ENCODE measurements at regions of chr6 and their contacts with region 1.

Region 1: DNA sequence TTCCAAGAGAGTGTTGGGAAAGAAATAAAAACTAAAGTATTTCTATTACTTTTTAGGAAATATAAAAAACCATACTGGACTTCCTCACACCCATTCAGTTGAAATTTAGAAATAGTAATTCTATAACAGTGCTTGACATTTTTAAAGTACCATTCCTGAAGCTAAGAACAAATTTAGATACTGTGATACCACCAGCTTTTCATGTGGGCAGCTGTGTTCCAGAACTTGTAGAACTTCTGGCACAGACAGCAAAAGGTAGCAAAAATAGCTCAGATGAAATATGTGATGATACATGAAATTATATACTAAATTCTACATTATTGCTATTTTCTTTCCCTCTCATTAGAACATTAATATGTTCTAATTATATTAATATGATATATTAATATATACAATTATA is 346.5 kb downstream of the SYNE1 start:
- DNase-seq: no peak
- ATAC-seq: no peak
- H3K4me3 ChIP-seq: no peak overlapping the region
- H3K27ac ChIP-seq: no peak overlapping the region
- H3K4me1 ChIP-seq: no peaks in the 10 kb centered on the region
- H3K27me3 ChIP-seq: no peaks in the 10 kb centered on the region

Region 2: GRCh38 chr6:152318278-152318677 is 27.6 kb after region 1 on chr6:
- intact Hi-C with region 1: loop called in 1 of 2 experiments (anchors 1 kb)
- DNase-seq: no peak
- ATAC-seq: no peak
- H3K4me3 ChIP-seq: no peak overlapping the region
- H3K27ac ChIP-seq: no peak overlapping the region
- H3K4me1 ChIP-seq: no peaks in the 10 kb centered on the region
- H3K27me3 ChIP-seq: no peaks in the 10 kb centered on the region

Region 3: DNA sequence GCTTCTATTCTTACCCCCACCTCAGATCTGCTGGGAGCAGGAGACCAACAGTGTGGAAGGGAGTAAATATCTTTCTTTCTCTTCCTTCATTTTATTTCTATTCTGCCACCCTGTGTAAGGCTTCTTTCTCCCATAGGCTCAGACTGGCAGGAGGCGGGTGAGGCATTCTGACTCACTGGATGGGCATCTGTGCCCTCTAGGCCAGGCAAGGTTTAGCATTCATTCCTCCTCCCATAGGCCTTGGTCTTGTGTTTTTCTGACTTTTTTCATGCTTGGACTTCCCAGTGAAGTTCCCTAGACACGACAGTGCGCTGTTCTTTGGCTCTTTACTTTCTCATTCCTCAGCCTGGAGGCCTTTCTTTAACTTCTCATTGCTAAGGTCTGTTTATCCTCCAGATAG is 111.3 kb after region 1 on chr6:
- intact Hi-C with region 1: no loop called
- DNase-seq: peak in 1 of 2 donors; percentile 56
- ATAC-seq: peak; percentile 68
- H3K4me3 ChIP-seq: no peak overlapping the region
- H3K27ac ChIP-seq: peak overlapping the region; percentile 46 to 93
- H3K4me1 ChIP-seq: peaks cover 5 to 8% of the 10 kb centered on the region in 2 donors
- H3K27me3 ChIP-seq: no peaks in the 10 kb centered on the region

Measured in aorta (tissue), 5 donors.